IMR-90 (cell line): ENCODE measurements at regions of chr2 and their contacts with region 1.

Region 1: GRCh38 chr2:19425419-19425818 is 67.0 kb upstream of the OSR1 start:
- DNase-seq: no peak
- ATAC-seq: no peak
- H3K4me3 ChIP-seq: no peak overlapping the region
- H3K27ac ChIP-seq: no peak overlapping the region
- H3K4me1 ChIP-seq: no peaks in the 10 kb centered on the region
- H3K27me3 ChIP-seq: peaks cover 2% of the 10 kb centered on the region
- CTCF ChIP-seq: no peak
- POLR2A ChIP-seq: no peak
- RAD21 ChIP-seq: no peak

Region 2: DNA sequence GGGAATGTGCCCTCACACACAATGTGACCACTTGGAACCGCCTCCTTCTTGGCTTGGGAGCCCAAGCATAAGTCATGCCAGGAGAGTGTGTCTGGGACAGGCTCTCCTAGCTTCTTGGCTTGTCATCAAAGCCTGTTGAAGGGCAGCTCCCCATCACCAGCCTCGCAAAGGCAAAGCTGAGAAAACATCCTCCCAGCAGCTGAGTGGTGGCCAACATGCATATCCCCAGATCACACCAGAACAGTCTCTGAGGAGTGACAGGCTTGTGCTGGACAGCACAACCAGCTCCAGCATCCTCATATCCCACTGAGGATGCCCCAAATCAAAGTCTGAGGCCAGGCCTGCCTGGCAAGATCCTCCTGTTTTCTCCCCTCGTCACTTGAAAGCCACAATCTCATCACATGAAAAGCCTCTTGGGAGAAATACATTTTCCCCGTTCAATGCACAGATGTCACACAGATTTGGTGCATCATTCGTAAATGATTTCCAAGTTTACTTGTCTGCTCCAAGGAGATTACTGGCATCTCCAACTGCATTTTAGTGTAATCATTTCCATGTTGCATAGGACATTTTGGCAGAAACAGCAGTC is 207.1 kb after region 1 on chr2:
- CTCF ChIA-PET with region 1: no interaction called
- POLR2A ChIA-PET with region 1: no interaction called
- dilution Hi-C with region 1: no loop called
- in situ Hi-C with region 1: no loop called
- intact Hi-C with region 1: loop called (anchors 2 kb)
- DNase-seq: no peak
- ATAC-seq: no peak
- H3K4me3 ChIP-seq: no peak overlapping the region
- H3K27ac ChIP-seq: no peak overlapping the region
- H3K4me1 ChIP-seq: no peaks in the 10 kb centered on the region
- H3K27me3 ChIP-seq: peaks cover 26% of the 10 kb centered on the region
- CTCF ChIP-seq: no peak
- POLR2A ChIP-seq: no peak
- RAD21 ChIP-seq: no peak